Activated CD4-positive, alpha-beta memory T cell treated with anti-CD3 and anti-CD28 coated beads, Interleukin-2, amount 10 ng/mL, durations not matched to agents 7 days and 5 days (primary cell): ENCODE measurements at regions of chr3 and their contacts with region 1.

Region 1: GRCh38 chr3:58305882-58306711 is at the starts of genes HTD2 and RPP14:
- DNase-seq: peak; percentile 99
- H3K4me3 Mint-ChIP-seq: peak within 1 kb of the TSS; percentile 94
- H3K27ac Mint-ChIP-seq: peak within 1 kb of the TSS; percentile 98
- H3K4me1 Mint-ChIP-seq: peaks cover 37% of the 10 kb centered on the region
- H3K27me3 Mint-ChIP-seq: peaks cover 5% of the 10 kb centered on the region
- total RNA-seq, gene HTD2: 6.3 to 8.5 TPM
- total RNA-seq, gene RPP14: 10.7 to 11.2 TPM

Region 2: DNA sequence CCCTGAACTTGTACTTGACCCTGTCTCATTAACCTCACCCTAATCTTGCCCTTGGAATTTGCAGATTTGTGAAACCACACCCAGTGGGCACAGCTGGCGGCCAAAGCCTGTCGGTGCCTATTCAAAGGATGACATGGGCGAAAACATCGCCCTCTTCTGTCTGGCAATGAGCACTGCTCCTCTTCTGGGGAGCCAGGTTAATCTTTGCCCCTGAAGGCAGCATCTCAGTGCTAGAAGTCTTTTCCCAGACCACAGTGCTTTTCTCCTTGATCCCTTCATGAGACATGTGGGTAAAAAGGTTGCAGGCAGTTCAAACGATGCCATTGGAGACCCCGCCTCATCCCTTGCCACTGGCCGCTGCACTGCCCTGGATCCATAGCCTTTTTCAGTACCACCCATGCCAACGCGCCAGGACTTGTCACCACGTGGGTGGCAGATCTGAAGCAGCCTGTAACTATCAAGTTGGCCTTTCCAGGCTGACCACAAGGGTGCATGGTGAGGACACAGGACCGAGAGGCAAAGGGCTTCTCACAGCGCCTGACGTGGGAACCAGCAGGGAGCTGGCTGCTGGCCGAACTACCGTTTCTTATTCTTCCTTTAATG is 88.8 kb before region 1 on chr3:
- CTCF ChIA-PET with region 1: interaction called, 14 read pairs
- POLR2A ChIA-PET with region 1: interaction called, 3 read pairs
- DNase-seq: peak; percentile 63
- H3K4me3 Mint-ChIP-seq: no peak overlapping the region
- H3K27ac Mint-ChIP-seq: no peak overlapping the region
- H3K4me1 Mint-ChIP-seq: peaks cover 28% of the 10 kb centered on the region
- H3K27me3 Mint-ChIP-seq: peaks cover 5% of the 10 kb centered on the region

Region 3: GRCh38 chr3:58324391-58325390 is 18.6 kb after region 1 on chr3:
- CTCF ChIA-PET with region 1: interaction called, 49 read pairs
- POLR2A ChIA-PET with region 1: interaction called, 9 read pairs
- DNase-seq: no peak
- H3K4me3 Mint-ChIP-seq: no peak overlapping the region
- H3K27ac Mint-ChIP-seq: peak overlapping the region; percentile 51
- H3K4me1 Mint-ChIP-seq: peaks cover 29% of the 10 kb centered on the region
- H3K27me3 Mint-ChIP-seq: no peaks in the 10 kb centered on the region

Region 4: DNA sequence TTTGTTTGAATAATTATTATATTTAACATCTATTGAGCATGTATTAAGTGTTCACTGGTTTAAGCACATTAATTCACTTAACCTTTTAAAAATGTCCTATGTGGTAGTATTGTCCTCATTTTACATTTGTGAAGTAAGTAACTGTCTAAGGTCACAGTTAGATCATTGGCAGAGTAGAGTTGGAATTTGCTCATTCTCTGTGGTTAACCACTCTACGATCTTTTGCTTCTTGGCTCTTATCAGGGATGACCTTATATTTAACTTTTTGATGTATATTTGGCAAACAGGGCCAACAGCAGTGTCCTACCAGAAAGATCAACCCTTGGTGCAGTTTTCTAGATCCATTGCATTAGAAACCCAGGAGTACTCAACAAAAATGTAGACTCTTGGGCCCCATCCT is 60.6 kb after region 1 on chr3:
- CTCF ChIA-PET with region 1: no interaction called
- POLR2A ChIA-PET with region 1: no interaction called
- DNase-seq: no peak
- H3K4me3 Mint-ChIP-seq: no peak overlapping the region
- H3K27ac Mint-ChIP-seq: no peak overlapping the region
- H3K4me1 Mint-ChIP-seq: peaks cover 25% of the 10 kb centered on the region
- H3K27me3 Mint-ChIP-seq: no peaks in the 10 kb centered on the region

Region 5: DNA sequence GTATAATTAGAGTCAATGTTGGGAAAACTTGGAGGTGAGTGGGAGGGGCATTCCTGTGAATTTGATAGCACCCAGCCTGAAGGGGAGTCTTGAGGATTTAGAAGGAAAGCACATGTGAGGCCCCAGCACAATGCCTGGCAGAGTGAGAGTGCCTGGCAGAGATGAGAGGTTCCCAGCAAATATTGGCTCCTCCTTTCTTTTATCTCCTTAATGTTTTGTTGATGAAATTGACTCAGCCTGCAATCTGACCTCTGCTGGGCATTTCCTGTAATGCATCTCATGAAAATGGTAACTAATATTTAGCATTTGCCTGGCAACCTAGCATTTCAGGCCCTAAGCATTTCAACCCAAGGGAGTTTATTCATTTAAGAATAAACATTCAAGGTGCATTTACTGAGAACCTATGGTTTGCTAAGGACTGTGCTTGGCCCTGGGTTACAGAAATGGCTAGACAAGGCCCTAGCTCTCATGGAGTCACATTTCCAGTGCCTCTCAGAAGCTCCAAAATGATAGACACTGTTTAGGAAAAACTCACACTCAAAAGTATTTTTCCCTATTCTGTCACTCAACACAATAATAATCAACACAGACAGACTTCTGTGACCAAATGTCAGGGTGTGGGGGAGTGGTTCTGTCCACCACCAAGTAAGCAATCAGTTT is 108.6 kb after region 1 on chr3:
- CTCF ChIA-PET with region 1: interaction called, 28 read pairs
- POLR2A ChIA-PET with region 1: interaction called, 13 read pairs
- DNase-seq: peak; percentile 54
- H3K4me3 Mint-ChIP-seq: no peak overlapping the region
- H3K27ac Mint-ChIP-seq: no peak overlapping the region
- H3K4me1 Mint-ChIP-seq: peaks cover 5% of the 10 kb centered on the region
- H3K27me3 Mint-ChIP-seq: no peaks in the 10 kb centered on the region

Region 6: GRCh38 chr3:58491506-58492402 is 185.7 kb after region 1 on chr3 and contains the start of gene KCTD6:
- CTCF ChIA-PET with region 1: interaction called, 27 read pairs
- POLR2A ChIA-PET with region 1: interaction called, 38 read pairs
- DNase-seq: peak; percentile 91
- H3K4me3 Mint-ChIP-seq: peak within 1 kb of the TSS; percentile 94
- H3K27ac Mint-ChIP-seq: peak within 1 kb of the TSS; percentile 78
- H3K4me1 Mint-ChIP-seq: peaks cover 52% of the 10 kb centered on the region
- H3K27me3 Mint-ChIP-seq: peaks cover 35% of the 10 kb centered on the region
- total RNA-seq, gene KCTD6: 9.4 to 12.4 TPM